ENCODE measurements at regions of chr1 and their contacts with region 1.

Region 1: DNA sequence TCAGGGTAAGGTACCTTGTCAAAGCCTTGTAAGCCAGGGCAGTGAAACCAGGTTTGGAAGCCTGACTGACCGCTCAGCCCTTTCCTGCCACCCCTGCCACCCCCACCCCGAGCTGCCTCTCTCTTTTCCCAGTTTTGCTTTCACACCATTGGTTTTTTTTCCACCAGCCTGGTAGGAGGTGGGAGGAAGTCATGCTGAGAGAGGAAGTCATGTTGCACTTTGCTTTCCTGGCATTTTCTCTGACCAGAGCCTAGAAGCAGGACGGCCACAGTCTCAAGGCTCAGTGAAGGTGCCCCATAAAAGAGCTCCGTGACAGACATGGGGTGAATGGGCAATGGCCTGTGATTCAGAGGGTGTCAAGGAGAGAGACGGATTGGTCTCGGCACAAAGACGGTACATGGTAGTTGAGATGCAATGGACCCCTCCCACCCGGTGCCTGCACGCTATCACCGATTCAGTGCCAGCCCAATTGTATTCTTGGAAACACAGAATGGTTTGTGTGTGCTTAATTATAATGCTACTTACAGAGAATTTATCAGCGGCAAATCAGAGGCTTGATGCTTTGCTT is 42.1 kb upstream of the DMRTB1 start:
- DNase-seq: no peak
- H3K4me3 ChIP-seq: no peak overlapping the region
- H3K27ac ChIP-seq: no peak overlapping the region
- H3K4me1 ChIP-seq: peaks cover 18% of the 10 kb centered on the region
- H3K27me3 ChIP-seq: peaks cover 41% of the 10 kb centered on the region
- CTCF ChIP-seq: no peak

Region 2: GRCh38 chr1:53249706-53250105 is 167.4 kb before region 1 on chr1:
- CTCF ChIA-PET with region 1: no interaction called
- POLR2A ChIA-PET with region 1: interaction called, 15 read pairs
- intact Hi-C with region 1: no loop called
- DNase-seq: no peak
- H3K4me3 ChIP-seq: no peak overlapping the region
- H3K27ac ChIP-seq: no peak overlapping the region
- H3K4me1 ChIP-seq: no peaks in the 10 kb centered on the region
- H3K27me3 ChIP-seq: peaks cover 46% of the 10 kb centered on the region
- CTCF ChIP-seq: no peak

Measured in A673 (cell line).